MCF 10A (cell line): ENCODE measurements at regions of chr10 and their contacts with region 1.

Region 1: DNA sequence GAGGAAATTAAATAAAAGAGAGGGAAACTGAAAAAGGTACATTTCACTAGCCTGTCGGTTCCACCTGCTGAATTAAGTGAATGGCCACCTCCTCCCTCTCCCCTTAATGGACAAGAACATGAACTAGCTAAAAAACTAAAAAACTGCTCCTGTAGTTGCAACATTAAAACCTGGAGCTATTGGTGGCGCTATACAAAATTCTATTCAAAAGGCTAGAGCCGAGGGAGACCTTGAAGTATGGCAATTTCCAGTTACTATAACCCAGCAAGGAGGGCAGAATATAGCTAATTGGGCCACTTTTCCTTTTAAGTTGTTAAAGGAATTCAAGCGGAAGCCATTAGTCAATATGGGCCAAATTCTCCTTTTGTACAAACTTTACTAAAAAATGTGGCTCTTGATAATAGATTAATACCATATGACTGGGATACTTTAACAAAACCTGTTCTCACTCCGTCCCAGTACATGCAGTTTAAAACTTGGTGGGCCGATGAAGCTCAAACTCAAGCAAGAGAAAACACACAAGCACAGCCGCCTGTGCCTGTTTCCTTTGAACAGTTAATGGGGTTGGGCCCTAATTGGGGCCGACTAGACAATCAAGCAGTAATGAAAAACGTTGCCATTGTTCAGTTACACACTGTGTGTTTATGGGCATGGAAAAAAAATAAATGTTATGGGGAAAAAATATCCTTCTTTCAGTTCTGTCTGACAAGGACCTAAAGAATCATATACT is 6.5 kb upstream of the CHST3 start:
- DNase-seq: no peak
- H3K4me3 Mint-ChIP-seq: no peak overlapping the region
- H3K27ac Mint-ChIP-seq: no peak overlapping the region
- H3K4me1 Mint-ChIP-seq: peaks cover 10% of the 10 kb centered on the region
- H3K27me3 Mint-ChIP-seq: no peaks in the 10 kb centered on the region
- CTCF ChIP-seq: no peak

Region 2: GRCh38 chr10:71817831-71818655 is 139.7 kb before region 1 on chr10:
- CTCF ChIA-PET with region 1: no interaction called
- POLR2A ChIA-PET with region 1: no interaction called
- intact Hi-C with region 1: no loop called
- DNase-seq: no peak
- H3K4me3 Mint-ChIP-seq: no peak overlapping the region
- H3K27ac Mint-ChIP-seq: no peak overlapping the region
- H3K4me1 Mint-ChIP-seq: no peaks in the 10 kb centered on the region
- H3K27me3 Mint-ChIP-seq: no peaks in the 10 kb centered on the region
- CTCF ChIP-seq: no peak

Region 3: GRCh38 chr10:71899665-71900412 is 57.9 kb before region 1 on chr10:
- CTCF ChIA-PET with region 1: interaction called, 20 read pairs
- POLR2A ChIA-PET with region 1: no interaction called
- intact Hi-C with region 1: no loop called
- DNase-seq: no peak
- H3K4me3 Mint-ChIP-seq: no peak overlapping the region
- H3K27ac Mint-ChIP-seq: no peak overlapping the region
- H3K4me1 Mint-ChIP-seq: no peaks in the 10 kb centered on the region
- H3K27me3 Mint-ChIP-seq: no peaks in the 10 kb centered on the region
- CTCF ChIP-seq: no peak

Region 4: GRCh38 chr10:72243822-72244643 is 286.3 kb after region 1 on chr10:
- CTCF ChIA-PET with region 1: no interaction called
- POLR2A ChIA-PET with region 1: no interaction called
- intact Hi-C with region 1: no loop called
- DNase-seq: peak; percentile 97
- H3K4me3 Mint-ChIP-seq: peak overlapping the region; percentile 40
- H3K27ac Mint-ChIP-seq: peak overlapping the region; percentile 88
- H3K4me1 Mint-ChIP-seq: peaks cover 71% of the 10 kb centered on the region
- H3K27me3 Mint-ChIP-seq: no peaks in the 10 kb centered on the region
- CTCF ChIP-seq: peak; percentile 42